ENCODE measurements at regions of chr22 and their contacts with region 1.

Region 1: GRCh38 chr22:45645526-45646414 is 25.9 kb upstream of the ATXN10 start:
- DNase-seq: peak; percentile 47 to 85 (median 73)
- ATAC-seq: peak; percentile 95
- H3K4me3 ChIP-seq: no peak overlapping the region
- H3K4me3 Mint-ChIP-seq: peak overlapping the region in 6 of 10 donors; percentile 30 to 66 (median 50)
- H3K27ac ChIP-seq: no peak overlapping the region
- H3K27ac Mint-ChIP-seq: peak overlapping the region in 1 of 9 donors; percentile 33
- H3K4me1 ChIP-seq: peaks cover 0 to 7% of the 10 kb centered on the region in 2 donors
- H3K4me1 Mint-ChIP-seq: peaks cover 0 to 12% (median 0%) of the 10 kb centered on the region in 7 donors
- H3K27me3 ChIP-seq: peaks cover 0 to 10% of the 10 kb centered on the region in 2 donors
- H3K27me3 Mint-ChIP-seq: peaks cover 33 to 69% (median 49%) of the 10 kb centered on the region in 5 donors

Region 2: GRCh38 chr22:45577746-45578523 is 67.8 kb before region 1 on chr22:
- CTCF ChIA-PET with region 1: no interaction called
- POLR2A ChIA-PET with region 1: no interaction called
- intact Hi-C with region 1: loop called in 1 of 2 experiments (anchors 2 kb)
- DNase-seq: peak; percentile 34 to 82 (median 62)
- ATAC-seq: peak; percentile 82
- H3K4me3 ChIP-seq: no peak overlapping the region
- H3K4me3 Mint-ChIP-seq: no peak overlapping the region
- H3K27ac ChIP-seq: no peak overlapping the region
- H3K27ac Mint-ChIP-seq: no peak overlapping the region
- H3K4me1 ChIP-seq: peaks cover 0 to under 1% of the 10 kb centered on the region in 2 donors
- H3K4me1 Mint-ChIP-seq: peaks cover 3 to 9% (median 5%) of the 10 kb centered on the region in 7 donors
- H3K27me3 ChIP-seq: no peaks in the 10 kb centered on the region
- H3K27me3 Mint-ChIP-seq: peaks cover 0 to 18% (median 12%) of the 10 kb centered on the region in 5 donors

Region 3: GRCh38 chr22:45632791-45633515 is 12.8 kb before region 1 on chr22:
- CTCF ChIA-PET with region 1: interaction called, 12 read pairs
- POLR2A ChIA-PET with region 1: no interaction called
- intact Hi-C with region 1: no loop called
- DNase-seq: no peak
- ATAC-seq: no peak
- H3K4me3 ChIP-seq: no peak overlapping the region
- H3K4me3 Mint-ChIP-seq: no peak overlapping the region
- H3K27ac ChIP-seq: no peak overlapping the region
- H3K27ac Mint-ChIP-seq: no peak overlapping the region
- H3K4me1 ChIP-seq: no peaks in the 10 kb centered on the region
- H3K4me1 Mint-ChIP-seq: peaks cover 0 to 1% (median 0%) of the 10 kb centered on the region in 7 donors
- H3K27me3 ChIP-seq: peaks cover 3 to 4% of the 10 kb centered on the region in 2 donors
- H3K27me3 Mint-ChIP-seq: peaks cover 43 to 63% (median 57%) of the 10 kb centered on the region in 5 donors

Region 4: DNA sequence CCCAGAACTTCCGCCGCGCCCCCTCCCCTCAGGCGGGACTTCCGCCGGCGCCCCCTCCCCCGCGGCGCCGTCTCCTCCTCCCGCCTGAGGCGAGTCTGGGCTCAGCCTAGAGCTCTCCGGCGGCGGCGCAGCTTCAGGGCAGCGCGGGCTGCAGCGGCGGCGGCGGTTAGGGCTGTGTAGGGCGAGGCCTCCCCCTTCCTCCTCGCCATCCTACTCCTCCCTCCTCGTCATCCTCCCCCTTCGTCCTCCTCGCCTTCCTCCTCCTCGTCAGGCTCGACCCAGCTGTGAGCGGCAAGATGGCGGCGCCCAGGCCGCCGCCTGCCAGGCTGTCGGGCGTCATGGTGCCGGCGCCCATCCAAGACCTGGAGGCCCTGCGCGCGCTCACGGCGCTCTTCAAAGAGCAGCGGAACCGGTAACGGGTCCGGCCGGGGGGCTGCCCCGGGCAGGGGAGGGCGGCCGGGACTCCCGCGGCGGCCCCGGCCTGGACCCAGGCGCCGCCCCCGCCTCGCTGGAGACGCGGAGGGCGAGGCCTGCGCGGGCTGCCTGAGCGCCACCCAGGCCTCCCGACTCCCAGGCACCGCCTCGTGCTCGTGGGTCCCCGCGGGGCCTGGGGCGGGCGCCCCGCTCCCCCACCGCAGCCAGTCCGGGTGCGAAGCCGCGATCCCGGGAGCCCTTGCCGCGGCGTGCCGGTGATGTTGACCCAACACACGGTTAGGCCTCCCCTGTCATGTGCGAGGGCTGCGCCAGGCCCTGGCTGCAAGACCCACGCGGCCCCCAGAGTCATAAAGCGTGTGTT is 26.2 kb after region 1 on chr22 and contains the start of gene ATXN10:
- CTCF ChIA-PET with region 1: no interaction called
- POLR2A ChIA-PET with region 1: no interaction called
- intact Hi-C with region 1: loop called in 1 of 2 experiments (anchors 1 kb)
- DNase-seq: peak; percentile 55 to 79 (median 74)
- ATAC-seq: peak; percentile 90
- H3K4me3 ChIP-seq: peak within 1 kb of the TSS; percentile 49
- H3K4me3 Mint-ChIP-seq: peak within 1 kb of the TSS; percentile 86 to 95 (median 90)
- H3K27ac ChIP-seq: peak within 1 kb of the TSS; percentile 75
- H3K27ac Mint-ChIP-seq: peak within 1 kb of the TSS; percentile 38 to 92 (median 88)
- H3K4me1 ChIP-seq: peaks cover 13 to 25% of the 10 kb centered on the region in 2 donors
- H3K4me1 Mint-ChIP-seq: peaks cover 23 to 43% (median 41%) of the 10 kb centered on the region in 7 donors
- H3K27me3 ChIP-seq: no peaks in the 10 kb centered on the region
- H3K27me3 Mint-ChIP-seq: peaks cover 4 to 10% (median 6%) of the 10 kb centered on the region in 5 donors
- total RNA-seq, gene ATXN10: 64.2 to 85.7 (median 73.1) TPM

Measured in naive thymus-derived CD4-positive, alpha-beta T cell (primary cell).